Esophagus muscularis mucosa (tissue), 4 donors: ENCODE measurements at regions of chr5 and their contacts with region 1.

Region 1: DNA sequence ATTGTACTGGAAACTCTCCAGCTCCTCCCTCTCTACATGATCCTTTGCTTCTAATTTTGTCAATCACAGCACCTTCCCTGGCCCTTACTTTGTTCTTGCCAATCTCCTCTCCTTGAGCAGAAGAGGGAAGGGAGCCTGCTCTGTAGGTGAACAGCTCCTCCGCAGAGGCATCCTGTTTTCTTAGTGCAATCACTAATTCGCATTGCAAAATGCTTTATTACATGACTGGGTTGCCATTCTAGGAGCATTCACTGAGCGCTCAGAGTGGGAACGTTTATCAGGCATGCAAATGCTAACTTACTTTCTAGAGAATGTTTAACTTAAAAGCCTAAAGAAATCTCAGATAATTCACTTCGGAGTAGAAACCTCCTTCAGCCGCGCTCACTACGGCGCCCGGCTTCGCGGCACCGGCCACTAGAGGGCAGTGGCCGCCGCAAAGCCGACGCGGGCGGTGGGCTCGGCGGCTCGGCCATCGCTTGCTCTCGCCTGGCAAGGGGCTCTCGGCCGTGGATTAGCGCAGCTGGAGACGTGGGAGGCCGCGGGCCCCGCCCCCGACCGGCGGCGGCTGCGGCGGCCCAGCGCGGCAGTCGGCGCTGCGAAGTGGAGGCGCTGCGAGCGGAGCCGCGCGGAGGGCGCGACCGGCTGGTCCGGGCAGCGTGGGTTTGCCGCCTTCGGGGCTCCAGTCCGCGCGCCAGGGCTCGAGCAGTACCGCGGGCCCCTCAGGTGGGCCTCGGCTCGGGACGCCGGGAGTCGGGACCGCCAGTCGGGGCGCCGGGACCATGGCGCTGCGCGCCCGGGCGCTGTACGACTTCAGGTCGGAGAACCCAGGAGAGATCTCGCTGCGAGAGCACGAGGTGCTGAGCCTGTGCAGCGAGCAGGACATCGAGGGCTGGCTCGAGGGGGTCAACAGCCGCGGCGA is at the start of gene SNX18:
- DNase-seq: peak; percentile 95
- H3K4me3 ChIP-seq: peak within 1 kb of the TSS; percentile 74 to 99 (median 96)
- H3K27ac ChIP-seq: peak within 1 kb of the TSS; percentile 92 to 96 (median 95)
- H3K4me1 ChIP-seq: peaks cover 27 to 52% (median 50%) of the 10 kb centered on the region in 4 donors
- H3K27me3 ChIP-seq: no peaks in the 10 kb centered on the region
- CTCF ChIP-seq: peak; percentile 98
- EP300 ChIP-seq: no peak
- POLR2A ChIP-seq: no peak
- total RNA-seq, gene SNX18: 34.1 to 93.3 (median 57.4) TPM

Region 2: DNA sequence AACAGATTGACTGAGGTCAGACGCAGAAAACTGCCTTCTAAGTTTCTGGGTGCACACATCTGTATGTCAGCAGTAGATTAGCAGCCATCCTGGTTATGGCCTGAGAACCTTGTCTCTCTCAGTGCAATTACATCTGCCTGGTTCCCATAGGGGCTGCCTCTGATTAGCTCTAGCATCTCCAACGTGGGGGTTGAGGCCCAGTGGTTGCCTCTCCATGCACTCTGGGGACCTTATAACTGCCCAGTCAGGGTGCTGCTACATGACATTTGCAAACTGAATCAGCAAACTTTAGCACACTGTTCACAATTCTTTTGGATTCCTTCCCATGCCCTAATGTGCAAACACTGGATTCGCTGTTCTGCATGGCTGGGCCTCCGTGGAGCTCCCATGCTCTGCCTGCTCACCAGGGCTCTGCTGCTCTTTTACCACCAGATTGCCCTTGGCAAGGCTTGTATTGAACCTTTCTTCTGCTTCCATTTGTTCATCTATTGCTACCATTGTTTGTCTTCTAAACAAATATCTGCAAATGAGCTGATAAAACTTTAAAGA is 36.3 kb after region 1 on chr5:
- intact Hi-C with region 1: no loop called
- DNase-seq: peak; percentile 72
- H3K4me3 ChIP-seq: no peak overlapping the region
- H3K27ac ChIP-seq: no peak overlapping the region
- H3K4me1 ChIP-seq: no peaks in the 10 kb centered on the region
- H3K27me3 ChIP-seq: no peaks in the 10 kb centered on the region
- CTCF ChIP-seq: no peak
- EP300 ChIP-seq: no peak
- POLR2A ChIP-seq: no peak

Region 3: DNA sequence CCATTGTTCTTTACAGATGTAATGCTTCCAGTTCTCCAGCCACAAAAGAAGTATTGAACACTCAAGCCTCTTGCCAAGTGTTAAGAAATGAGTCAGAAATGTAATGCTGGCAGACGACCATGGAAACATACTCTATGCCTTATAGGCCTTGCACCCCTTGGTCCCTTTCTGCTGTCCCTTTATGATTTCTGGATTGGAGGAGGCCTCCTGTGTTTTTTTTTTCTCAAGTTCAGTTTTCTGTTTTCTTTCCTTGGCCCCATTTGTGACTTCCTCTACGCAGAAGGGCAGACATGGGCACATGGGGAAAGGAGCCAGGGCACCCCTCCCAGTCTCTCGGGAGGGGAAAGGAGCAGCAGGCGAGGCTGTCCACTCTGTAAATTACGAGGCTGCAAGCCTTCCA is 53.5 kb after region 1 on chr5:
- intact Hi-C with region 1: no loop called
- DNase-seq: no peak
- H3K4me3 ChIP-seq: no peak overlapping the region
- H3K27ac ChIP-seq: peak overlapping the region in 1 of 4 donors; percentile 14
- H3K4me1 ChIP-seq: peaks cover 5 to 13% (median 10%) of the 10 kb centered on the region in 4 donors
- H3K27me3 ChIP-seq: no peaks in the 10 kb centered on the region
- CTCF ChIP-seq: no peak
- EP300 ChIP-seq: no peak
- POLR2A ChIP-seq: no peak

Region 4: DNA sequence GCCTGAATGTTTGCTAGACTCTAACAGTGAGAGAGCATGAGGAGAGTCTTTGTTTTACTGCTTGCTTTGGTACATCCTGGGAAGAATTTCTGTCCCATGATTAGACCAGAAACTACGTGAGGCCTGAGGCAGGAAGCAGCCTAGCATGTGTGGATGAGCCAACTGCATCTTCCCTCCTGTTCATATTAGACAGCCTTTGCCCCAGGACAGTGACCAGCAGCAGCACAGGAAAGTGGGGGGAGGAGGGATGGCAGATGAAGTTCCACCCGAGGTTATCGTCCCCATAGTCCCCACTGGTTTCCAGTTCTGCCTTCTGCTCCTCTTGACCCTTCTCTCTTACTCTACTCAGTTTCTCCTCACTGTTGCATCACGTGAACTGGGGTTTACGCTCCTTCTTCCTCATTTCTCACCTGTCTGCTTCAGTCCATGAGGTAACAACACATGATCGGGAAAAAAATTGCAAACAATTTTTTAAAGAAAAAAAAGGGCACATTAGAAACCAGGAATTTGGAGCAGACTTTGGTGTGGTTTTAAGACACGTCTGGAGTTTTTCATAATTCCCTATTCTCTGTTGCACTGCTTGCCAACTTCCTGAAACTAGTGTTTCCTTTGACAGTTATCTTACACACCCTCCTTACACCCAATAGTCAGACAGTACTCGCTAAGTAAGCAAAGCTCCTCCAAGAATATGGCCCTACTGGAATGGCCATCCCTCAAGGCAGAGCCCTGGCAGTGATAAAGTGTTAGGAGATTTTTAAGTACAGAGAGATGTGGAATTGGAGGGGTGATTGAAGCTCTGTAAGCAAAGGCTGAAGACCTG is 84.2 kb after region 1 on chr5:
- intact Hi-C with region 1: no loop called
- DNase-seq: no peak
- H3K4me3 ChIP-seq: no peak overlapping the region
- H3K27ac ChIP-seq: peak overlapping the region; percentile 2 to 52 (median 44)
- H3K4me1 ChIP-seq: peaks cover 6 to 14% (median 8%) of the 10 kb centered on the region in 4 donors
- H3K27me3 ChIP-seq: no peaks in the 10 kb centered on the region
- CTCF ChIP-seq: no peak
- EP300 ChIP-seq: no peak
- POLR2A ChIP-seq: no peak

Region 5: DNA sequence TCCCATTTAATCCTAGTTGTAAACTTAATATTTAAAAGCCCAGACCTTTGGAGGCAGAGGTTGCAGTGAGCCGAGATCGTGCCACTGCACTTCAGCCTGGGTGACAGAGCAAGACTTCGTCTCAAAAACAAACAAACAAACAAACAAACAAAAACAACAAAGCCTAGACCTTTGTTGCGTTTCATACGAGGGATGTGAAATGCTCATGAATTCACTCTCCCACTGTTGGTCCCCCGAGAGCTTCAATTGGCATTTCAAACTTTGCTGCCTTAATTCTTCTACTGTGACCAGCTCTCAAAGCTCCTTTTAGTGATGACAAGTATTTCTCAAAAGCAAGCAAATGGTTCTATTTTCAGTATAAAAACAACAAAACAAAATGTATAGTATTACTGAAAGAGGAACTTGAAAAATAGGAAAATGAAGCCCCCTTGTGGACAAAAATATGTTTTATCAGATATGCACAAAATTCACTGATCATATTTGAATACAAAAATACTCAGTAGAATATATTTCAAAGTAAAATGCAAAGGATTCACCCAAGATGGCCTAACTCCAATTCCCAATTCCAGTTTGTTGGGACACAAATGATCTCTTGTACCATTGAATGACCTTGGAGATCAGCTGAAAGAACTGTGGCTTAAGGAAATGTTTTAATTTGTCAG is 327.6 kb after region 1 on chr5:
- intact Hi-C with region 1: loop called (anchors 1 kb)
- DNase-seq: no peak
- H3K4me3 ChIP-seq: peak overlapping the region in 3 of 4 donors; percentile 16 to 37 (median 34)
- H3K27ac ChIP-seq: no peak overlapping the region
- H3K4me1 ChIP-seq: peaks cover 0 to 6% (median 3%) of the 10 kb centered on the region in 4 donors
- H3K27me3 ChIP-seq: peaks cover 0 to 4% (median 0%) of the 10 kb centered on the region in 4 donors
- CTCF ChIP-seq: peak; percentile 58 to 69 (median 65)
- EP300 ChIP-seq: no peak
- POLR2A ChIP-seq: no peak

Region 6: GRCh38 chr5:54867310-54867944 is 350.0 kb after region 1 on chr5:
- intact Hi-C with region 1: loop called (anchors 2 kb)
- DNase-seq: no peak
- H3K4me3 ChIP-seq: peak overlapping the region; percentile 24 to 45 (median 28)
- H3K27ac ChIP-seq: no peak overlapping the region
- H3K4me1 ChIP-seq: peaks cover 0 to 6% (median under 1%) of the 10 kb centered on the region in 4 donors
- H3K27me3 ChIP-seq: peaks cover 0 to 3% (median 0%) of the 10 kb centered on the region in 4 donors
- CTCF ChIP-seq: peak; percentile 58 to 68 (median 65)
- EP300 ChIP-seq: no peak
- POLR2A ChIP-seq: no peak

Region 7: GRCh38 chr5:55159763-55160492 is 642.5 kb after region 1 on chr5 and contains the start of gene GPX8:
- intact Hi-C with region 1: loop called (anchors 10 kb)
- DNase-seq: peak; percentile 45
- H3K4me3 ChIP-seq: peak within 1 kb of the TSS; percentile 41 to 62 (median 50)
- H3K27ac ChIP-seq: peak within 1 kb of the TSS; percentile 56 to 68 (median 65)
- H3K4me1 ChIP-seq: peaks cover 4 to 13% (median 7%) of the 10 kb centered on the region in 4 donors
- H3K27me3 ChIP-seq: peaks cover 0 to 8% (median 0%) of the 10 kb centered on the region in 4 donors
- CTCF ChIP-seq: peak; percentile 61 to 63 (median 63)
- EP300 ChIP-seq: no peak
- POLR2A ChIP-seq: no peak
- total RNA-seq, gene GPX8: 8.4 to 12.5 (median 9.3) TPM